ENCODE measurements at regions of chr16 and their contacts with region 1.

Region 1: GRCh38 chr16:46908540-46909372 is 24.6 kb downstream of the GPT2 start:
- DNase-seq: peak; percentile 47 to 86
- H3K4me3 ChIP-seq: no peak overlapping the region
- H3K27ac ChIP-seq: peak overlapping the region in 2 of 5 donors; percentile 37 to 41
- H3K4me1 ChIP-seq: peaks cover 0 to 24% (median 14%) of the 10 kb centered on the region in 4 donors
- H3K27me3 ChIP-seq: no peaks in the 10 kb centered on the region
- CTCF ChIP-seq: peak in 5 of 7 experiments; percentile 41 to 90 (median 69)
- EP300 ChIP-seq: no peak
- POLR2A ChIP-seq: no peak

Region 2: DNA sequence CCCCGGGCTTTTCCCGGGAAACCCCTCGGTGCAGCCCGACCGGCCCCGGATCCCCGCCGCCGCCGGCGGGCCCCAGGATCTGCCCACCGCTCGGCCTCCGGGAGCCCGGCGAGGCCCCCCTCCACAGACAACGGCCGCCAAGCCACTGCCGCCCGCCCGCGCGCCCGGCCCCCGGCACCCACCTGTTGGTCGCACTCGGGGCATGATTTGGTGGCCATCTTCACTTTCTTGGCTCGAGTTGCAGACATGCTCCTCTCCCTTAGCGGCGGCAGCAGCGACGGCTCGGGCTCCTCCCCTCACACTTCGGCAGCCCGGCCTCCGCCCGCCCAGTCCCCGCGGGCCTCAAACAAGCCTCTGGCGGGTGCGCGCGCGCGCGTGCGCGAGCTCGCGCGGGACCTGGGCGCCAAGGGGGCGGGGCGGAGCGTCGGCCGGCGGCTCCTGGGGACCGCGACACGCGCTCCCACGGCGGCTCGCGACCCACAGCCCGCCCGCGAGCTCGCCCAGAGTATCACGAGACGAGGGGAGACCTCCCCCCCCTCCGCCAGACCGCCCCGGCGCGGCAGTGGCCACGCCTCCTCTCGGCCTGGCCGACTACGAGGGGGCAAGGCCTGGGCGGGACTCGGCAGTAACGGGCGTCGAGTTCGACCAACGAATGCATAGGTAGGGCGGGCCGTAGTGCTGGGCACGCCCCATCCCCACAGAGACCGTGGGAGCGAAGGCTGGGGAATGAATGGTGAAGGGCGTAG is 77.7 kb before region 1 on chr16 and contains the start of gene C16orf87:
- intact Hi-C with region 1: no loop called
- DNase-seq: peak; percentile 93 to 98
- H3K4me3 ChIP-seq: peak within 1 kb of the TSS; percentile 77 to 97 (median 92)
- H3K27ac ChIP-seq: peak within 1 kb of the TSS; percentile 87 to 97 (median 93)
- H3K4me1 ChIP-seq: peaks cover 0 to 27% (median 13%) of the 10 kb centered on the region in 4 donors
- H3K27me3 ChIP-seq: no peaks in the 10 kb centered on the region
- CTCF ChIP-seq: no peak
- EP300 ChIP-seq: no peak
- POLR2A ChIP-seq: no peak
- total RNA-seq, gene C16orf87: 1.3 to 16.2 (median 8.4) TPM in 4 of 5 donors, not detected in the other

Region 3: DNA sequence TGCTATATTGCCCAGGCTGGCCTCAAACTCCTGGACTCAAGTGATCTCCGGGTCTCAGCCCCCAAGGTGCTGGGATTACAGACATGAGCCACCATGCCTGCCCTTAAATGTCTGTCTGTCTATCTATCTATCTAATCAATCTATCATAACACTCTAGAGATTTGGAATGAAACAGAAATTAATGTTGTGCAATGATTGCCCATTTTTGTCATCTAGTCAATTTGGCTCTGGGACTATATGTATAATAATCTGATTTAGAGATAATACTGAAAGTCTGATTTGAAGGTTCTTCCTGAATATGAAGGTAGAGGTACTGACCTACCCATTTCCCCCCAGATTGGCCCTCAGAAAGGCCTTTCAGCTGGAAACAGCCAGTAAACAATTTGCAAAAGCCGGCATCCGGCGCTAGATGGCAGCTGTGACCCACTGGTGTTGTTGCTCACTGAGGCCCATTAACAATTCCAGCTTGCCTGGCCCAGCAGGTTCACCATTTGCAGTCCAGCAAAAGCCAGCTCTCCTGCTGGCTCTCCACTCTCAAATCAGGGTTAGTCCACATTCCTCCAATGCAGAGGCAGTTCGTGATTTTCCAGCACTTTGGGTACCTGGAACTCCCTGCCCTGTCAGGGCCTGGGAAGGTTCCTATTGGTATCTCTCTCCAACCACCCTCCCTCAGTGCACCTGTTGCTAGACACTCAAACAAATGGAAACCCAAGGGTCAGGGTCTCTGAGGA is 54.9 kb before region 1 on chr16:
- intact Hi-C with region 1: loop called (anchors 5 kb)
- DNase-seq: peak; percentile 87 to 93
- H3K4me3 ChIP-seq: no peak overlapping the region
- H3K27ac ChIP-seq: peak overlapping the region in 4 of 5 donors; percentile 9 to 58 (median 46)
- H3K4me1 ChIP-seq: peaks cover 5 to 37% (median 22%) of the 10 kb centered on the region in 4 donors
- H3K27me3 ChIP-seq: no peaks in the 10 kb centered on the region
- CTCF ChIP-seq: peak in 5 of 7 experiments; percentile 63 to 87 (median 67)
- EP300 ChIP-seq: no peak
- POLR2A ChIP-seq: no peak